HEK293 (cell line): ENCODE measurements at regions of chr5 and their contacts with region 1.

Region 1: DNA sequence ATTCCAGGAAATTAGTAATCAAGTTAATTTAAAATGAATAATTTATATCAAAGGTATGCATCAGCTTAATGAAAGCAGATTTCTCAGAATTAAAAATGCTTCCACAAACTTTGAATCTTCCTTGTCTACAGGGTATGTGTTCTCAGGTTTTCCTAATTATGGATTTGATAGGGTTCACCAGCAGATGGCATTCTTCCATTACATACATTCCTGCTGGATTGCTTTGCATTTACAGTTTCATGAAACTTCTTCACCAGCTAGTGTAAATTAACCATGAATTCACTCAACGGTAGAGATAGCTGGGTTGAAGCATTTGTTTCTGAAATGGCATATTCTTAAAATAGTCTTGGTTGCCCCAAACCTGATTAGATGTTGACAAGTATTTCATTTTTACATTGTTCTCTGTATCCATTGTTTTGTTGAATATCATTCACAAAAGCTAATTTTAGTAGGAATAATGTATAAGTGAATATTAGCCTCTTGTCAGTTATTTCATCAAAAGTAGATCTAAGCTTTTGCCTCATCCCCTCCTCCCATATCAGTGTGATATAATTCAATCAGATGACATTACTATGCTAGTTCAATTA is 68.7 kb upstream of the WDR41 start:
- H3K4me3 ChIP-seq: no peak overlapping the region
- H3K27ac ChIP-seq: no peak overlapping the region
- H3K4me1 ChIP-seq: no peaks in the 10 kb centered on the region
- CTCF ChIP-seq: peak; percentile 68; the same call in 1 of the 2 replicates

Region 2: DNA sequence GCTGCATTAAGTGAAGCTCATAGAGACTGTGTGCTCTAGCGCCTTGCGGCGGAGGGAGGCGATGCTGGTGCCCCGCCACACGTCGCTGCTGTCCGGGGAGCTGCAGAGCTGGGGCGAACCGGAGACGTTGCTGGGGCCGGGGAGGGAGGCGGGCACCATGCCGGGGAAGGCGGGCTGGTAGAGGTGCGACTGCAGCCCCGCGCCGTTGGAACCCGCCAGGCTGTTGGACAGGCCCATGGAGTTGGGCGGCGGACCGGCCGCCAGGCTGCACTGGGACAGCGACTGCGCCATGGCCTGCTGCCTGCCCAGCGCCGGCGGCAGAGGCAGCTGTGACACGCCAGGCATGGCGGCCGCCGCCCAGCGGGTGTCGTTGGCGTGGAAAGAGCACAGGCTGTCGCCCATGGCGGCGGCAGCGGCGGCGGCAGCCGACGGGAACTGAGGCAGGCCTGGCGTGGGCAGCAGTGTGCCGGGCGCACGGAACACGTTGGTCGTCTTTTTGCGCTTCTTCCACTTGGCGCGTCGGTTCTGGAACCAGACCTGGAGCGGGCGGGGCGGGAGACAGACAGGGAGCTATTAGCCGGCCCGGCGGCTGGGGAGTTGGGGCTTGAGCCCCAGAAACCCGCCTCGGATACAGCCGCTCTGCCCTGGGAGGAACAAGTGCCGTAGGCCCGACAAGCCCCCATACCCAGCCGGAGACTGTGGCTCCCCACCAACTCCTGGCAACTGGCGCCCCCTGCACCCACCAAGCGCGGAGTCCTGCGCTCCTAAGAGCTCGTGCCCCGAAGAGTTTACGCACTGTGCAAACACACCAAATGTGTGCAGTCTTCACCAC is 69.7 kb after region 1 on chr5:
- CTCF ChIA-PET with region 1: interaction called, 13 read pairs
- POLR2A ChIA-PET with region 1: no interaction called
- H3K4me3 ChIP-seq: peak overlapping the region; percentile 62
- H3K27ac ChIP-seq: peak overlapping the region; percentile 71; the same call in 1 of the 2 replicates
- H3K4me1 ChIP-seq: peaks cover 3% of the 10 kb centered on the region
- CTCF ChIP-seq: peak; percentile 86

Region 3: GRCh38 chr5:77662635-77663034 is 101.9 kb after region 1 on chr5:
- CTCF ChIA-PET with region 1: no interaction called
- POLR2A ChIA-PET with region 1: no interaction called
- H3K4me3 ChIP-seq: no peak overlapping the region
- H3K27ac ChIP-seq: no peak overlapping the region
- H3K4me1 ChIP-seq: no peaks in the 10 kb centered on the region
- CTCF ChIP-seq: no peak

Region 4: GRCh38 chr5:77751668-77752023 is 190.9 kb after region 1 on chr5:
- CTCF ChIA-PET with region 1: no interaction called
- POLR2A ChIA-PET with region 1: no interaction called
- H3K4me3 ChIP-seq: no peak overlapping the region
- H3K27ac ChIP-seq: no peak overlapping the region
- H3K4me1 ChIP-seq: peaks cover 3% of the 10 kb centered on the region; the same call in 1 of the 2 replicates
- CTCF ChIP-seq: no peak

Region 5: DNA sequence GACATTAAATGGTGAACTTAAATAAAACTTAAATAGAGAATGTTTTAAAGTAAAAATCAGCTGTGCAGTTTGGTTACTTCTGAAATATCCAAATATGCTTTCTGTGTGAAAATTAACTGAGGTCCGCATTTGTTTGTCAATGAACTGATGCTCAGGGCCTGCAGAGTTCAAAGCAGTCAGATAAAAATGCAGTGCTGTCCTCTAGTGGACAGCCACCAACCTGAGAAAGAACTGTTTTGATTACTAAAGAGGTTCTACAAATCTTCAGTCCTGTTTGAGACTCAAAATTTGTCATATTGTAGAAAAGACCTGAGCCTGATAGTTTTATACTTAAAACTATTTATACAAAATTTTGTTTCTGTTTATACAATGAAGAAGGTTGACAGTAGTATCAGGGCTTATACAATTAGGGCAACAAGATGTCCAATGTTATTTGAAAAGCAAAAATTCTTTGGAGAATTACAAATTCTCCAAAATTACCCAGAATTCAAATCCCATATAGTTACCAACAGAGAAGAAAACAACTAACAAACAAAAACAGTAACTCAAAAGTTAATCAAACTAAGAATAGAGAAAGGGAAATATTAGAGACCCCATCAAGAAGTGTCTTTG is 447.7 kb after region 1 on chr5:
- CTCF ChIA-PET with region 1: interaction called, 19 read pairs
- POLR2A ChIA-PET with region 1: no interaction called
- H3K4me3 ChIP-seq: no peak overlapping the region
- H3K27ac ChIP-seq: no peak overlapping the region
- H3K4me1 ChIP-seq: peaks cover 8% of the 10 kb centered on the region
- CTCF ChIP-seq: peak; percentile 64